ENCODE measurements at regions of chr20 and their contacts with region 1.

Region 1: GRCh38 chr20:5557123-5557522 is 193.1 kb upstream of the SHLD1 start:
- DNase-seq: no peak
- H3K4me3 ChIP-seq: no peak overlapping the region
- CTCF ChIP-seq: peak; percentile 58

Region 2: DNA sequence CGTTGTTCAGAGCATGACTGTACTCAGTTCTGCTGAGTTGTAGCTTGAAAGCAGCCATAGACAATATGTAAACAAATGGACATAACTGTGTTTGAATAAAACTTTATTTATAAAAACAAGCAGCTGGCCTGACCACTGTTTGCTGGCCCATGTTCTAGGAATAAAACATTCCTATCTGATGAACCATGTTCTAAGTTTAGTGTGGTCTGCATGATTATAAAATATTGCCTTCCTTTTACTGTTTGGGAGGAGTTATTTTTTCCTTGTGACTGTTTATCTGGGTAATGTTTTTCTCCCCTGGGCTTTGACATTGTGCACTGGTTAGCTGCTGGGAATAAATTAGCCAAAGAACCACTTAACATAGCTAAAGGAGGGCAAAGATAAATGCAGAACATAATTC is 375.2 kb before region 1 on chr20:
- CTCF ChIA-PET with region 1: no interaction called
- POLR2A ChIA-PET with region 1: no interaction called
- DNase-seq: no peak
- H3K4me3 ChIP-seq: no peak overlapping the region
- CTCF ChIP-seq: no peak

Region 3: GRCh38 chr20:5535125-5535771 is 21.9 kb before region 1 on chr20:
- CTCF ChIA-PET with region 1: interaction called, 24 read pairs
- POLR2A ChIA-PET with region 1: no interaction called
- DNase-seq: peak; percentile 94
- H3K4me3 ChIP-seq: no peak overlapping the region
- CTCF ChIP-seq: no peak

Region 4: DNA sequence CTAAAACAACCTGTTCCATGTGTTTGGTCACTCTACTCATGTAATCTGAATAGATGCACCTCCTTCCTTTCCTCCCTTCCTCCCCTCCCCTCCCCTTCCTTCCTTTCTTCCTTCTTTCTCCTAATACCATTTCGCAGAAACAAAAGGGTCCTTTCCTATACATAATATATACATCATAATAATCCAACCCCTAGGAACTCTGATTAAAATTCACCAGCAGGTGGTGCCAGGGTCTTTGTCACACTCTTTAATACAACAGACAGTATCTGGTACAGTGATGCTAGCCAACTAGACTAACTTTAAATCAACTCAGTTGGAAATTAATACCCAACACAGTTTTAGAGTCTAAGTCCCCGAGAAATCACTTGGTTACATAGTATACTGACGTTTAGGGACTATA is 11.9 kb after region 1 on chr20:
- CTCF ChIA-PET with region 1: interaction called, 71 read pairs
- POLR2A ChIA-PET with region 1: interaction called, 3 read pairs
- DNase-seq: no peak
- H3K4me3 ChIP-seq: no peak overlapping the region
- CTCF ChIP-seq: peak; percentile 7

Region 5: GRCh38 chr20:5621305-5621704 is 64.2 kb after region 1 on chr20:
- CTCF ChIA-PET with region 1: no interaction called
- POLR2A ChIA-PET with region 1: no interaction called
- DNase-seq: no peak
- H3K4me3 ChIP-seq: no peak overlapping the region
- CTCF ChIP-seq: no peak

Measured in AG04449 (cell line).